Endothelial cell of umbilical vein (primary cell): ENCODE measurements at regions of chr1 and their contacts with region 1.

Region 1: GRCh38 chr1:99599678-99600175 is 46.2 kb upstream of the PALMD start:
- DNase-seq: peak; percentile 97
- H3K4me3 ChIP-seq: no peak overlapping the region
- H3K27ac ChIP-seq: peak overlapping the region; percentile 93
- H3K4me1 ChIP-seq: peaks cover 65% of the 10 kb centered on the region
- H3K27me3 ChIP-seq: no peaks in the 10 kb centered on the region
- CTCF ChIP-seq: no peak
- POLR2A ChIP-seq: no peak

Region 2: DNA sequence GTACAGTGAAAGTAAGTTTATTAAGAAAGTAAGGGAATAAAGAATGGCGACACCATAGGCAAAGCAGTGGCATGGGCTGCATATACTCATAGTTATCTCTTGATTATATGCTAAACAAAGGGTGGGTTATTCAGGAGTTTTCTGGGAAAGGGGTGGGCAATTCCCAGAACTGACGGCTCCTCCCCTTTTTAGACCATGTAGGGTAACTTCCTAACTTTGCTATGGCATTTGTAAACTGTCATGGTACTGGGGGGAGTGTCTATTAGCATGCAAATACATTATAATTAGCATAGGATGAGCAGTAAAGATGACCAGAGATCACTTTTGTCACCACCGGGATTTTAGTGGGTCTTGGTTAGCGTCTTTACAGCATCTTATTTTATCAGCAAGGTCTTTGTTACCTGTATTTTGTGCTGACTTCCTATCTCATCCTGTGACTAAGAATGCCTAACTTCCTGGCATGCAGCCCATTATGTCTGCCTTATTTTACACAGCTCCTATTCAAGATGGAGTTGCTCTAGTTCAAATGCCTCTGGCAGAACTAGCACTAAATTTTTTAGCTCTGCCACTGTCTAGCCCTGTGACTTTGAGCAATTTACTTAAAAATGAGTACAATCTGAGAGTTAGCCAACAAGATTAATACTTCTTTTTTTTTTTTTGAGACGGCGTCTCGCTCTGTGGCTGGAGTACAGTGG is 64.1 kb before region 1 on chr1:
- CTCF ChIA-PET with region 1: no interaction called
- POLR2A ChIA-PET with region 1: no interaction called
- dilution Hi-C with region 1: no loop called
- intact Hi-C with region 1: loop called (anchors 1 kb)
- DNase-seq: no peak
- H3K4me3 ChIP-seq: no peak overlapping the region
- H3K27ac ChIP-seq: no peak overlapping the region
- H3K4me1 ChIP-seq: peaks cover 18% of the 10 kb centered on the region
- H3K27me3 ChIP-seq: no peaks in the 10 kb centered on the region
- CTCF ChIP-seq: no peak
- POLR2A ChIP-seq: no peak

Region 3: DNA sequence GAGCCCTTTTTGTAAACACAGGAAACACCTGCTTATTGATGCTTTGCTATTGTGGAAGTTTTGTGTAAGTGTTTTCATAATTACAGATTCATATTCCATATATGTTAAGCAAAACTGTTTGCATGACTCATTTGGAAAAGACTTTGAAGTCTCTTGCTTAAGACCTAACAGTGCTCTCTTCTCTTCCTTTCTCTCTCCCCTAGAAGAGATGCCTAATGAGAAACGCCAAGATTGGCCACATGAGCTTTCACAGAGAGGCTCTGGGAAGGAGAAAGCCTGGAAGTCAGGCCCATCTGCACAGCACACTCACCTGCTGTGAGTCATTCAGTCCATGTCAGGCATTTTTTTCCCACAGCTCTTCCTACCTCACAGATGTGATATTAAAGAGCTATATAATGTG is 55.4 kb before region 1 on chr1:
- CTCF ChIA-PET with region 1: no interaction called
- POLR2A ChIA-PET with region 1: no interaction called
- dilution Hi-C with region 1: no loop called
- intact Hi-C with region 1: loop called (anchors 1 kb)
- DNase-seq: peak; percentile 87
- H3K4me3 ChIP-seq: no peak overlapping the region
- H3K27ac ChIP-seq: peak overlapping the region; percentile 54
- H3K4me1 ChIP-seq: peaks cover 49% of the 10 kb centered on the region
- H3K27me3 ChIP-seq: no peaks in the 10 kb centered on the region
- CTCF ChIP-seq: no peak
- POLR2A ChIP-seq: no peak

Region 4: GRCh38 chr1:99638853-99639252 is 39.1 kb after region 1 on chr1:
- CTCF ChIA-PET with region 1: interaction called, 9 read pairs
- POLR2A ChIA-PET with region 1: no interaction called
- dilution Hi-C with region 1: no loop called
- intact Hi-C with region 1: loop called (anchors 1 kb)
- DNase-seq: peak; percentile 81
- H3K4me3 ChIP-seq: no peak overlapping the region
- H3K27ac ChIP-seq: peak overlapping the region; percentile 77
- H3K4me1 ChIP-seq: peaks cover 35% of the 10 kb centered on the region
- H3K27me3 ChIP-seq: no peaks in the 10 kb centered on the region
- CTCF ChIP-seq: no peak
- POLR2A ChIP-seq: peak; percentile 65

Region 5: GRCh38 chr1:99659755-99660210 is 60.1 kb after region 1 on chr1:
- CTCF ChIA-PET with region 1: no interaction called
- POLR2A ChIA-PET with region 1: no interaction called
- dilution Hi-C with region 1: no loop called
- intact Hi-C with region 1: loop called (anchors 2 kb)
- DNase-seq: peak; percentile 91
- H3K4me3 ChIP-seq: no peak overlapping the region
- H3K27ac ChIP-seq: peak overlapping the region; percentile 62
- H3K4me1 ChIP-seq: peaks cover 81% of the 10 kb centered on the region
- H3K27me3 ChIP-seq: no peaks in the 10 kb centered on the region
- CTCF ChIP-seq: no peak
- POLR2A ChIP-seq: no peak

Region 6: GRCh38 chr1:99820546-99820945 is 220.8 kb after region 1 on chr1:
- CTCF ChIA-PET with region 1: no interaction called
- POLR2A ChIA-PET with region 1: no interaction called
- dilution Hi-C with region 1: no loop called
- intact Hi-C with region 1: no loop called
- DNase-seq: no peak
- H3K4me3 ChIP-seq: no peak overlapping the region
- H3K27ac ChIP-seq: no peak overlapping the region
- H3K4me1 ChIP-seq: no peaks in the 10 kb centered on the region
- H3K27me3 ChIP-seq: no peaks in the 10 kb centered on the region
- CTCF ChIP-seq: no peak
- POLR2A ChIP-seq: no peak